ENCODE measurements at regions of chr2 and their contacts with region 1.

Region 1: DNA sequence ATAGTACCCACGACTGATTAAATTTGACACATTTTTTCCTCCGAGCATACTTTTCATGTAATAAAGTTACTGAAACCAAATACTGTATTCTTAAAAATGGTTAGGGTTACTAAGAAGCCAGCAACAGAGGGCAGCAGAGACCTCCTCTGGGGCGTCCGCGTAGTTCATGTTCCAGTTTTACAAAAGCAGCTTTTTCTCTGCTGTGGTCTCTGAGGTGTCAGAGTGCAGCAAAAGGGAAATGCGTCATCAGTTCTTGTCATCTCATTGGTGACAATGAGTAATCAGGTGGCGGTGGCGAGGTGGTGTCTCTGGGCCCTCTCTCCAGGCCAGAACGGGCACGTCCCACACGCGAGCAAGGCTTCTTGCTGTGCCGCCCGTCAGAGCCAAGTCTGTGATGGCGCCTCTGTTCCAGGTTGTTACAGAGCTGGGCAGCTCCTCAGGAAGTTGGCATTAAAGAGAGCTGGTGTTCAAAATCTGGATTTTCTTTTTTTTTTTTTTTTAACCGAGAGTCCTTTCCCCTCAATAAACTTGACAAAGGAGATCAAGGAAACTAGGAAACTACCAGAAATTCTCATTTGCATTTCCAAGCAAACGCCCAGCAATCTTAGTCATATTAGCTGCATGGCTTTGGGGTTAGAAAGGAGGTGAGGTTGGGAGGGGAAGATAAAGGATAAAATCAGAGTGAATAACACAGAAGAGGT is 98.6 kb upstream of the BZW1 start:
- DNase-seq: peak; percentile 97

Region 2: GRCh38 chr2:199985625-199986207 is 727.4 kb before region 1 on chr2:
- in situ Hi-C with region 1: loop called (anchors 25 kb)
- DNase-seq: peak; percentile 84

Region 3: DNA sequence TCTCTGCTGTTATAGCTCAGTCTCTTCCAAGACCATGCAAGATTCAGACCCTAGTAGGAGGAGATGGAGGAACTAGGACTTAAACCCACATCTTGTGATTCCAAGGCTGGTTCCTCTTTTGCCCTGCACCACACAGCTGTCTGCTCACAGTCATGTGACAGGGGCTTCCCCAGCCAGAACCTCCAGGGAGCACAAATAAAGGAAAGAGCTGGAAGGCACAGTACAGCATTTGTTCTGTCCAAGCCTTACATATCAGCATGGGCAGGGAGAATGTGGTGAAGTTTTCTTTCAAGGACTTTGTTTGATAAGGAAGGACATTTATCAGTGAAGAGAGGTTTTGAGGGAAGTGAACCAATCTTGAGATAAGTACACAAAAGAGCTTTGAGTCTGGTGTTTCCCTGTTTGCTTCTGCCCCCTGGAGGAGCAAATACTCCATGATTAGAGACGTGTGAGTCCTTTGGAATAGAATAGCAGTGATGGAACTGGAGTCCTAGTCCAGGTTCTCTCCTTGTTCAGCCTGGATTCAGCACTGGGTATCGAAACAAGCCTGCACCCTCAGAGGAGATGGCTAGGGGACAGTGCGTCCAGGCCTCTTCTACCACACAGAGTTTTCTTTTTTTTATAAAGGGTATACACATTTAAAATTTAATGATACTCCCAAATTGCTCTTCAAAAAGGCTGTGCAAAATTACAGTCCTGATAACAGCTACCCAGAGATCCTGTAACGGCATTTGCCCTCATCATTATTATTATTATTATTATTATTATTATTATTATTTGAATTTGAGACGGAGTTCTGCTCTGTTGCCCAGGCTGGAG is 445.2 kb after region 1 on chr2:
- in situ Hi-C with region 1: loop called (anchors 25 kb)
- DNase-seq: peak; percentile 96

Region 4: DNA sequence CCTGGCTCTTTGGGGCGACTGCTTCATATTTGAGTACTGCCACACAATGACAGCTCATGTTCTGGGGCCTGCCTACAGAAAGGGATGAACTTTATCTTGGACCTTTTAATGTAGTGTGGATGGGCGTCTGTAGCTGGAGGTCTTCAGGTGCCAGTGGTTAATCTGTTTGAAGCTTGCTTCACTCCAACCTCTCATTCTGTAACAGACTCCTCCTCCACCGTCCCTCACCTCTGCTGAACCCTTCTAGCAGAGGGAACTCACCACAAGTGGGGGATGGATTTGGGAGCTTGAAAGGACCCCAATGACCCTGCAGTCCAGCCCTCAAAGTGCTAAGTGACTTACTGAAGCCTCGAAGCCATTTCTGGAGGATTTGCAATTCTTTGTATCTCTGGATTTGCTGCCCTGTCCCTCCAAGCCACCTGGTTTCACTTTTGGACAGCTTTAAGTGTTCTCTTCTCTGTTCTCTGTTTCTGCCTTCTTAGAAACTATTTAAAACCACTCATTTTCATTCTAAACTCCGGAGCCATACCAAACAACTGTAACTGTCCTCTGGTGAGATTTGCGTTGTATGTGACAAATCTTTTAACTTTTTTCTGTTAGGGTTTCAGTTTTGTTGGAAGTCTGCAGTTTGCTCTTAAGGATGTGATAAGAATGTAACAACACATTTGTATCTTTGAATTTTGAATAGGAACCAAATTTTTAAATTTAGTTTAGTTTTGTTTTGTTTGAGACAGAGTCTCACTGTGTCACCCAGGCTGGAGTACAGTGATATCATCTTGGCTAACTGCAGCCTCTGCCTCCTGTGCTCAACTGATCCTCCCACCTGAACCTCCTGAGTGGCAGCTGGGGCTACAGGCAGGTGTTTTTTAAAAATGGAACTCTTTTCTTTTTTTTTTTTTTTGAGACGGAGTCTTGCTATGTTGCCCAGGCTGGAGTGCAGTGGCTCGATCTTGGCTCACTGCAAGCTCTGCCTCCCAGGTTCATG is 510.2 kb after region 1 on chr2:
- in situ Hi-C with region 1: no loop called
- DNase-seq: no peak